ENCODE measurements at regions of chr16 and their contacts with region 1.

Region 1: GRCh38 chr16:3861808-3862451 is 18.6 kb downstream of the CREBBP start:
- DNase-seq: no peak
- ATAC-seq: no peak
- H3K4me3 ChIP-seq: no peak overlapping the region
- H3K27ac ChIP-seq: no peak overlapping the region
- H3K4me1 ChIP-seq: peaks cover 8% of the 10 kb centered on the region; the same call in 1 of the 2 replicates
- H3K27me3 ChIP-seq: no peaks in the 10 kb centered on the region
- CTCF ChIP-seq: no peak

Region 2: GRCh38 chr16:3587547-3588110 is 274.3 kb before region 1 on chr16:
- CTCF ChIA-PET with region 1: no interaction called
- POLR2A ChIA-PET with region 1: no interaction called
- in situ Hi-C with region 1: no loop called
- intact Hi-C with region 1: no loop called
- DNase-seq: no peak
- ATAC-seq: no peak
- H3K4me3 ChIP-seq: no peak overlapping the region
- H3K27ac ChIP-seq: no peak overlapping the region
- H3K4me1 ChIP-seq: no peaks in the 10 kb centered on the region
- H3K27me3 ChIP-seq: no peaks in the 10 kb centered on the region
- CTCF ChIP-seq: no peak

Region 3: DNA sequence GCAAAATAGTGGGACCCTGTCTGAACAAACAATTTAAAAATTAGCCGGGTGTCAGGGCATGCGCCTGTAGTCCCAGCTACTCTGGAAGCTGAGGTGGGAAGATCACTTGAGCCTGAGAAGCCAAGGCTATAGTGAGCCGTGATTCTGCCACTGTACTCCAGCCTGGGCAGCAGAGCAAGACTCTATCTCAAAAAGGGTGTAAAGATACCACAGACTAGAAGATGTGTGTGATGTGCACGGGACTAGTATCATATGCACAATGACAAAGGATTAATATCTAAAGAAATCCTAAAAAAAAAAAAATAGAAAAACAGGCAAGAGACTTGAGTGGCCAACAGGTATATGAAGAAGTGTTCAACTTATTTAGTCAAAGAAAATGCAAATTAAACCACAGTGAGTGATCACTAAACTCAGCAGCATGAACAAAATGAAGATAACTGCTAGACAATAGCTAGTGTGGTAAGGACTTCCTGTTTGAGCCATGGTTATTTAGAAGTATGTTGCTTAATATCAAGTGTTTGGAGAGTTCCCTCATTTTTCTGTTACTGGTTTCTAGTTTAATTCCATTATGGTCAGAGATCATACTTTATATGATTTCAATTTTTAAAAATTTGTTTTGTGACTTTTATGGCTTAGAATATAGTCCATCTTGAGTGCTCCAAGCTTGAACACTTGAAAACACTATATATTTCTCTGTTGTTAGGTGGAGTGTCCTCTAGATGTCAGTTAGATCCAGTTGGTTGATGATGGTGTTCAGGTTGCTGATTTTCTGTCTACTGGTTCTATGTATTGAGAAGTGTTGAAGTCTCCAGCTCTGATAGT is 235.8 kb before region 1 on chr16:
- CTCF ChIA-PET with region 1: no interaction called
- POLR2A ChIA-PET with region 1: interaction called, 10 read pairs
- in situ Hi-C with region 1: no loop called
- intact Hi-C with region 1: no loop called
- DNase-seq: no peak
- ATAC-seq: peak; percentile 71; the same call in 1 of the 2 replicates
- H3K4me3 ChIP-seq: no peak overlapping the region
- H3K27ac ChIP-seq: no peak overlapping the region
- H3K4me1 ChIP-seq: no peaks in the 10 kb centered on the region
- H3K27me3 ChIP-seq: no peaks in the 10 kb centered on the region
- CTCF ChIP-seq: no peak

Region 4: DNA sequence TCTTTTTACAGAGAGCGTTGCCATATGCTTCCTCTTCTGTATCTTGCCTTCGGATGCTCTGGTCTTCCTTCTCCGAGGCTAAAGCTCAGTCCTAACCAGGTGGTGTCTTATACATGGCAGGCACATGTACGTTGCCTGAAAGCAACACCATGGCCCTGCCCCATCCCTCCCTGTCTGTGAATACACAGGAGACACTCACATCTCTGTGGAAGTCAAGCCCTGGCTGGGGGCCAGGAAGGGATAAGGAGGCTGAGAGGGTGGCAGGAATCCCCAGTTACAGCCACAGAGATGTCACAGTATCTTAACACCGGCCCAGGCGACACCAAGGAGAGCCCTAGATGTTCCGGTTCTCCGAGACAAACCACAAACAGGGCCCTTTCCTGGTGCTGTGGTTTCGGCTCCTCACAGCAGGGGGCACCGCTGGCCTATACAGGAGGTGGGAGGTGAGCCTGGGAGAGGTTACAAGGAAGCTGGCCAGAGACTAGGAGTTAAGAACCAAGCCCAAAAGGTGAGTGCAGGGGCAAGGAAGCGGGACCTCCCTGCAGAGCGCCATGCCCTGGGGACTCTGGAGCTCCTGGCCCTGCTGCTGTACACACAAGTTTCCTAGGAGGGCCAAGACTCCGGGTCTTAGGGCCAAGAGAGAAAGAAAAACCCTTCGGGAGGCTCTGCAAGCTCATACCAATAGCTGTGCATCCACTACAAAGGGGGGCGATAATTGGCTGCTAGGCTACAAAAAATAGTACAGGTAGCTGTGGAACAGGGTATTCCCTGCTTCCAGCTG is 338.3 kb after region 1 on chr16:
- CTCF ChIA-PET with region 1: no interaction called
- POLR2A ChIA-PET with region 1: interaction called, 10 read pairs
- in situ Hi-C with region 1: no loop called
- intact Hi-C with region 1: no loop called
- DNase-seq: no peak
- ATAC-seq: peak; percentile 93
- H3K4me3 ChIP-seq: no peak overlapping the region
- H3K27ac ChIP-seq: no peak overlapping the region
- H3K4me1 ChIP-seq: peaks cover 5% of the 10 kb centered on the region; the same call in 1 of the 2 replicates
- H3K27me3 ChIP-seq: no peaks in the 10 kb centered on the region
- CTCF ChIP-seq: no peak; the same call in 1 of the 2 replicates